Activated CD4-positive, alpha-beta T cell treated with anti-CD3 and anti-CD28 coated beads, Interleukin-2, amount 10 ng/mL, durations not matched to agents 24 days and 14 days (primary cell): ENCODE measurements at regions of chr1 and their contacts with region 1.

Region 1: DNA sequence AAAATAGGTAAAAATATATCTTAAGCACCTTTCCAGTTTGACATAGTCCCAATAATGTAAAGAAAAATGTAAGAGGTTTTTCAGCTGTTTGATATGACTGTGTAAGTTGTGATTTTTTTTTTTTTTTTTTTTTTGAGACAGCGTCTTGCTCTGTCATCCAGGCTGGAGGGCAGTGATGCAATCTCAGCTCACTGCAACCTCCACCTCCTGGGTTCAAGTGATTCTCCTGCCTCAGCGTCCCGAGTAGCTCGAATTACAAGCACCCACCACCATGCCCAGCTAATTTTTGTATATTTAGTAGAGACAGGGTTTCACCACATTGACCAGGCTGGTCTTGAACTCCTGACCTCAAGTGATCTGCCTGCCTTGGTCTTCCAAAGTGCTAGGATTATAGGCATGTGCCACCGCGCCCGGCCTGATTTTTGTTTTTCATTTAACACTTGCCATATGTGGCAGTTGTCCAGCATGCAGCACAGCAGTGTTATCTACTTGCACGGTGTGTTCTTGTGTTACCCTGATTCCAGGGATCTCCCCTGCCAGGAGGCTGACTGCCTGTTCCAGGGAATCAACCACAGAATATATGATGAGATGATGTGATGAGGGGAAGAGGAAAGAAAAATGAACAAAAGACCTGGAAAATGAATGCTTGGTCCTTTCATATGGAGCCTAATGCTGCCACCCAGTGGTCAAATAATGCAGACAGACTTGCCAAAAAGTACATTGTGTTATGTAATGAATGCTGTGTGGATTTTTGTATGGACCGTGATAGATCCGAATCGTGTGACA is 79.0 kb downstream of the RAVER2 start:
- DNase-seq: peak; percentile 88
- H3K4me3 Mint-ChIP-seq: no peak overlapping the region
- H3K27ac Mint-ChIP-seq: no peak overlapping the region
- H3K4me1 Mint-ChIP-seq: peaks cover 28% of the 10 kb centered on the region
- H3K27me3 Mint-ChIP-seq: peaks cover 3% of the 10 kb centered on the region

Region 2: DNA sequence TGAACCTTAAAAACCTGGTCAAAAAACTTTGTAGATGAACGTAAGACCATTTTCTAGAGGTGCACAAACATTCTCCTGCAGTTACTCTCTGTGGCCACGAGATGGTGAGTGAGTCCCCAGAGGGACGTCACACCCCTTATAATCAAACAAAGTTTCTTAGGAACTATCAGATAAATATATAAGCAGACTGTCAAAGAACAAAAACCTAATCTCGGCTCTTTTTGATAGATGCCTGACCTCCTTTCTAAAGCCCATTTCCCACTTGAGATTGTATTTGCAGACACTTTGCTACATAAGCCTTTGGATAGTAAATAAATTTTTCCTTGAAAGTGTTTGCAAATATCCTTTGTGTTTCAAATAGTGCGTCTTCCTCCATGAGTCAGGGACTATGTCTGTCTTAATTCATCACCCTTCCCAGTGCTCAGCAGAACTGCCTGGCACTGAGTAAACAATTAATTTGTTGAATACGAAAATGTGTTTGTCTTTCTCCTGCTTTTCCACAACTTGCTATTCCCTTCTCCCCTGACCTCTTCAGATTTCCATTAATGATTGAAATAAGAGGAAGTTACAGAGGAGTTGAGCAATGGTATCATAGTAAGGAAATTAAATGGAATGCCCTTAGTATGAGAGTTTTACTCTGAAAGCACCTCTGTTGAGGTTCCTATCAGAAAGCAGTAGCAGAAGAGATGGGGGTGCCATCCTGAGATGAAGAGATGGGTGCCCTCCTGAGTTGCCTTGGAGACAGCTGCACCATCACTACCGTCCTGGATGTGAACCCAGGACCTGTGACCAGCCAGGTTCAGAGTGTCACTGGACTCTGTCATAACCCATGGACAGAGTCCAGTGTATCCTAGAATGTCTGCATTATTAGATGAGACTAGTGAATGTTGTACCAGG is 136.8 kb before region 1 on chr1:
- intact Hi-C with region 1: loop called (anchors 1 kb)
- DNase-seq: peak; percentile 70
- H3K4me3 Mint-ChIP-seq: no peak overlapping the region
- H3K27ac Mint-ChIP-seq: no peak overlapping the region
- H3K4me1 Mint-ChIP-seq: peaks cover 7% of the 10 kb centered on the region
- H3K27me3 Mint-ChIP-seq: peaks cover 4% of the 10 kb centered on the region

Region 3: DNA sequence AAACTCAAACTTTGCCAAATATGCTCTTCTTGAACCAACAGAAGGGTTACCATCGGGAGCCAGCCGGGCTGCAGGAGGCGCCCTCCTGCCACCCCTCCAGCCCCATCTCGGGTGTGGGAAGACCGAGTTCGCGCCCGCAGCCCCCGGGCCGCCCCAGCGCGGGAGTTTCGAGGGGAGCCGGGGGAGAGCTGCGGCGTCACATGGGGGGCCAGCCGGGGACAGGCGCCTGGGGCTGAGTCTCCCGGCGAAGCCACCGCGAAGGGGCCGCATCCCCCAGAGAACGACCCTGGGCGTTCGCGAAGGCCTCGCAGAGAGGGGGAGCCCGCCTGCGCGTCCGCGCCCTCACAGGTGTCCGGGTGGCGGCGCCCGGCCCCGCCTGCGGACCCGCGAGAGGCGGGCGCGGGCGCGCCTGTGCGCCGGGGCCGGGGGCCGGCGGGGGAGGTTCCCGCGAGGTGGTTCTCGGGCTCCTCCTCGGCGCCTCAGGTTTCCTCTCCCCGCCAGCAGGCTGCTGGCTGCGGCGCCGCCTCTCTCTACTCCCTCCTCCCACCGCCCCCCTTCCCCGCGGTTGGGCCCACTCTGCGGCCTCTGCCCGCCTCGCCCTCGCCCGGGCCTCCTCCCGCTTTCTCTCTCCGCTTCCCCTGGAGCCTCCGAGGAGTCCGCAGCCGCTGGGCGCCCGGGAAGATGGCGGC is 79.2 kb before region 1 on chr1 and contains the start of gene RAVER2:
- intact Hi-C with region 1: loop called (anchors 5 kb)
- DNase-seq: peak; percentile 82
- H3K4me3 Mint-ChIP-seq: peak within 1 kb of the TSS; percentile 83
- H3K27ac Mint-ChIP-seq: peak within 1 kb of the TSS; percentile 29
- H3K4me1 Mint-ChIP-seq: peaks cover 5% of the 10 kb centered on the region
- H3K27me3 Mint-ChIP-seq: peaks cover 32% of the 10 kb centered on the region
- total RNA-seq, gene RAVER2: 0.44 and 0.54 TPM in 2 replicates

Region 4: GRCh38 chr1:64790832-64791487 is 32.9 kb before region 1 on chr1:
- intact Hi-C with region 1: no loop called
- DNase-seq: no peak
- H3K4me3 Mint-ChIP-seq: no peak overlapping the region
- H3K27ac Mint-ChIP-seq: no peak overlapping the region
- H3K4me1 Mint-ChIP-seq: no peaks in the 10 kb centered on the region
- H3K27me3 Mint-ChIP-seq: no peaks in the 10 kb centered on the region

Region 5: GRCh38 chr1:64923294-64923721 is 99.4 kb after region 1 on chr1:
- intact Hi-C with region 1: no loop called
- DNase-seq: no peak
- H3K4me3 Mint-ChIP-seq: peak overlapping the region; percentile 43
- H3K27ac Mint-ChIP-seq: peak overlapping the region; percentile 83
- H3K4me1 Mint-ChIP-seq: peaks cover 62% of the 10 kb centered on the region
- H3K27me3 Mint-ChIP-seq: no peaks in the 10 kb centered on the region

Region 6: GRCh38 chr1:65002508-65003315 is 178.8 kb after region 1 on chr1:
- intact Hi-C with region 1: loop called (anchors 5 kb)
- DNase-seq: peak; percentile 90
- H3K4me3 Mint-ChIP-seq: peak overlapping the region; percentile 70
- H3K27ac Mint-ChIP-seq: peak overlapping the region; percentile 43
- H3K4me1 Mint-ChIP-seq: peaks cover 23% of the 10 kb centered on the region
- H3K27me3 Mint-ChIP-seq: peaks cover 33% of the 10 kb centered on the region